Transverse colon (tissue), 4 donors: ENCODE measurements at regions of chr4 and their contacts with region 1.

Region 1: DNA sequence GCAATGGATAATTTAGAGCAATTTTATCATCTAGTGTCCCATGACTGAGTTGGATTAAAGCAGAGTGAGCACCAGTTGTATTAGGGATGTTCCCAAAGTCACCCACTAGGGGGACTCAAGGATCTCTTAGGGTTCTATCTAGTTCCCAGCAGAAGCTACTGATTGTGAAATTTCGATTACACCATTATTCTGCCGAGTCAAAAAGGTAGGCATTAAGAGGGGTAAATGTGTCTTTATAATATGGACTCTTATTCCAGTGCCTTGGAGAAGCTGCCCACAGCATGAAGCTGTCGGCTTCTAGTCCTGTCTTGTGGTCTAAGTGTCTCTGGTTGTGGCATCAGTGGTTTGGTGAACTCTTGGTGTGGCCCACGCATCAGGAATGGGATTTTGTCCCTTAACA is 53.3 kb downstream of the RGS12 start:
- DNase-seq: peak; percentile 34
- H3K4me3 ChIP-seq: no peak overlapping the region
- H3K27ac ChIP-seq: no peak overlapping the region
- H3K4me1 ChIP-seq: peaks cover 0 to 12% (median 0%) of the 10 kb centered on the region in 4 donors
- H3K27me3 ChIP-seq: no peaks in the 10 kb centered on the region
- CTCF ChIP-seq: peak; percentile 77 to 85 (median 85)
- EP300 ChIP-seq: no peak
- POLR2A ChIP-seq: no peak

Region 2: GRCh38 chr4:3292571-3293400 is 53.4 kb before region 1 on chr4 and contains the start of gene RGS12:
- in situ Hi-C with region 1: no loop called
- intact Hi-C with region 1: no loop called
- DNase-seq: peak; percentile 97
- H3K4me3 ChIP-seq: peak within 1 kb of the TSS; percentile 57 to 94 (median 81)
- H3K27ac ChIP-seq: peak within 1 kb of the TSS; percentile 92 to 97 (median 94)
- H3K4me1 ChIP-seq: peaks cover 0 to 24% (median 10%) of the 10 kb centered on the region in 4 donors
- H3K27me3 ChIP-seq: peaks cover 3% of the 10 kb centered on the region
- CTCF ChIP-seq: no peak
- EP300 ChIP-seq: no peak
- POLR2A ChIP-seq: peak; percentile 93
- total RNA-seq, gene RGS12: 12.4 to 77.4 (median 17.3) TPM

Region 3: DNA sequence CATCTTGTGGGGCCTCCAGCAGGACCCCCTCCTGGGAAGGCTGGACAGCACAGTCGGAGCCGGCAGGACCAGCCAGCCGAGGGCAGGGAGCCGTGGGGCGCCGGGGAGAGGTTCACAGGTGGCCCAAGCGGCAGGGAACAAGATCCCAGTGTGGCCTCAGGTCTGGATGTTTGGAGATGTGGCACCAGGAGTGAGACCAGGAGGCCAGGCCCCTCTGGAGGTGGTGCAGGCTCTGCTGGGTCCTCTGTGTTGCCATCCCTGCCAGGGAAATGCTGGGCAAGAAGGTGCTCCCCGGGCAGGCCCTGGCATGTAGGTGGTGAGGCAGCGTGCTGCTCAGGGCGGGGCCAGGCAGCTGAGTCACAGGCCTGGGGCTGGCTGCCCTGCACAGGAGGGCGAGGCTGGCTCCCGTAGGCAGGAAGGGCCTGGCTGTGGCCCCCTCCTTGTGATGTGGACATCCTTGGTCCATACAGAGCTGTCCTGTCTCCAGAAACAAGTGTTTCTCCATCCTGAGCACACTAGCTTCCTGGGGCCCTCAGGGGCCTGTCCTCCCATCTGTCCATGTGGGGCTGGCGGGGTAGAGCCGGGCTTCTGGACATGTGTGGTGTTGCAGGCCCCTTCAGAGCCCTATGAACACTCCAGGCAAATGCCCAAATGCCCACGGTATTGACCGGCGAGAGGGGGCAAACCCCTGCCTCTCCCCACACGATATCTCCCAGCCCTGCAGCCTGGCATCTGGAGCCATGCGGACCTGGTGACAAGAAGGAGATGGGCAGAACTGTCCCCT is 90.8 kb after region 1 on chr4:
- in situ Hi-C with region 1: loop called in 2 of 4 experiments (anchors 5 to 10 kb)
- intact Hi-C with region 1: no loop called
- DNase-seq: peak; percentile 66
- H3K4me3 ChIP-seq: no peak overlapping the region
- H3K27ac ChIP-seq: no peak overlapping the region
- H3K4me1 ChIP-seq: peaks cover 0 to 4% (median 1%) of the 10 kb centered on the region in 4 donors
- H3K27me3 ChIP-seq: no peaks in the 10 kb centered on the region
- CTCF ChIP-seq: no peak
- EP300 ChIP-seq: no peak
- POLR2A ChIP-seq: no peak